B cell (primary cell): ENCODE measurements at regions of chr5 and their contacts with region 1.

Region 1: DNA sequence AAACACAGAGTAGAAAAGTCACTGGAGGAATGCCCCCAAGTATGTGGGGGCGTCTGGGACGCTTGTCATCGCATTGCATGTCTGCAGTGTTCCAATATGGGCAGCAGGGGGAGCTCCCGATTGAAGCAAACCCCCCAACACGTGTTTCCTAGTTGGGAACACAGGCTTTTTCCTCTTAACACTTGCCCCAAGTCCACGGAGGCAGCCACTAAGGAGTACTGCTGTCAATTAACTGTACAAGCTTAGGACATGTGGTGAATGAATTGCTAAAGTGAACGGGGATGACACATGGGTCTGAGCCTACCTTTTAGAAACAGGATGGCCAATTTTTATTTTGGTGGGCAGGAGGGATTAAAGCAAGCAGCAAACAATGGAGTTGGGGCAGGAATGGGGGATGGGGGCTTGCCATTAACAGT is 2.2 kb downstream of the GABRB2 start:
- DNase-seq: no peak
- ATAC-seq: peak; percentile 43
- H3K4me3 ChIP-seq: no peak overlapping the region
- H3K4me3 Mint-ChIP-seq: no peak overlapping the region
- H3K27ac ChIP-seq: no peak overlapping the region
- H3K27ac Mint-ChIP-seq: no peak overlapping the region
- H3K4me1 ChIP-seq: peaks cover 16 to 22% of the 10 kb centered on the region in 2 donors
- H3K4me1 Mint-ChIP-seq: peaks cover 26% of the 10 kb centered on the region
- H3K27me3 ChIP-seq: peaks cover 0 to 37% (median 22%) of the 10 kb centered on the region in 4 experiments
- H3K27me3 Mint-ChIP-seq: peaks cover 42% of the 10 kb centered on the region
- CTCF ChIP-seq: peak; percentile 67

Region 2: DNA sequence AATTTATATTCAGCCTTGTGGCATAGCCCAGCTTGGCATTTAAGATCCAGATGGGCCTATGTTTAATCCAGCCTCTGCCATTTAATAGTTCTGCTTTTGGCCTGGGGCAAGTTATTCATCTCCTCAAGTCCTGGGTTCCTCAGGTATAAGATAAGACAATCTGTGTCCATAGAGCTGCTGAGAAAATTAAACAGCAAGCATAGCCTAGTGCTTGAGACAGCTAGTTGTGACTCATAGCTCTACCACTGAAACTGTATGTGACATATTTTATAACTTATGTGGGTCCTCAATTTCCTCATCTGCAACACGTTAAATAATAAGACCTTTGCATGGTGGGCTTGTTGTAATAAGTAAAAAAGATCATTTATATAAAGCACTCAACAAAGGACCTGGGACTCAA is 639.1 kb before region 1 on chr5:
- CTCF ChIA-PET with region 1: no interaction called
- POLR2A ChIA-PET with region 1: no interaction called
- intact Hi-C with region 1: no loop called
- DNase-seq: no peak
- ATAC-seq: no peak
- H3K4me3 ChIP-seq: no peak overlapping the region
- H3K4me3 Mint-ChIP-seq: no peak overlapping the region
- H3K27ac ChIP-seq: no peak overlapping the region
- H3K27ac Mint-ChIP-seq: no peak overlapping the region
- H3K4me1 ChIP-seq: no peaks in the 10 kb centered on the region
- H3K4me1 Mint-ChIP-seq: no peaks in the 10 kb centered on the region
- H3K27me3 ChIP-seq: no peaks in the 10 kb centered on the region
- H3K27me3 Mint-ChIP-seq: peaks cover 13% of the 10 kb centered on the region
- CTCF ChIP-seq: no peak

Region 3: DNA sequence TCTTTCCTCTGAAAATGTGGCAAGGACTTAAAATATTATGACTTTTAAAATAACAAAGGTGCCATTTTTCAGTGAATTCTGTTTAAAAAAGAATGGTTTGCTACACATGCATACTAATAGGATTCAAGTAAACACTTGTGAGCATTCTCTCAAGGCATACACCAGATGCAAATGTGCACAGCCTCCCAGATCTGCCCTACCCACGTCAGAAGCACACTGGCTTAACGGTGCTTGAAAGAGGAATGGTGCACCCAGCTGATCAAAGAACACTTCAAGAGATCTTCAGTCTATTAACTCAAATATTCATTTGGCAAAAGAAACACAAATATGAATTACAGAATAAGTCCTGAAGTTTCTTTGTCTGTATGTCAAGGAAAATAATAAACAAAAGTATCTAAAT is 13.7 kb before region 1 on chr5:
- CTCF ChIA-PET with region 1: no interaction called
- POLR2A ChIA-PET with region 1: no interaction called
- intact Hi-C with region 1: no loop called
- DNase-seq: no peak
- ATAC-seq: no peak
- H3K4me3 ChIP-seq: no peak overlapping the region
- H3K4me3 Mint-ChIP-seq: no peak overlapping the region
- H3K27ac ChIP-seq: no peak overlapping the region
- H3K27ac Mint-ChIP-seq: no peak overlapping the region
- H3K4me1 ChIP-seq: no peaks in the 10 kb centered on the region
- H3K4me1 Mint-ChIP-seq: no peaks in the 10 kb centered on the region
- H3K27me3 ChIP-seq: no peaks in the 10 kb centered on the region
- H3K27me3 Mint-ChIP-seq: no peaks in the 10 kb centered on the region
- CTCF ChIP-seq: no peak

Region 4: GRCh38 chr5:163347671-163348070 is 1803.3 kb after region 1 on chr5:
- CTCF ChIA-PET with region 1: interaction called, 6 read pairs
- POLR2A ChIA-PET with region 1: no interaction called
- intact Hi-C with region 1: loop called (anchors 5 kb)
- DNase-seq: peak; percentile 55
- ATAC-seq: no peak
- H3K4me3 ChIP-seq: no peak overlapping the region
- H3K4me3 Mint-ChIP-seq: no peak overlapping the region
- H3K27ac ChIP-seq: no peak overlapping the region
- H3K27ac Mint-ChIP-seq: no peak overlapping the region
- H3K4me1 ChIP-seq: no peaks in the 10 kb centered on the region
- H3K4me1 Mint-ChIP-seq: no peaks in the 10 kb centered on the region
- H3K27me3 ChIP-seq: peaks cover 0 to 2% (median 0%) of the 10 kb centered on the region in 4 experiments
- H3K27me3 Mint-ChIP-seq: peaks cover 24% of the 10 kb centered on the region
- CTCF ChIP-seq: peak; percentile 76